ENCODE measurements at regions of chr7 and their contacts with region 1.

Region 1: GRCh38 chr7:50304911-50305582 is 531 bp downstream of the IKZF1 start:
- DNase-seq: no peak
- H3K4me3 Mint-ChIP-seq: peak overlapping the region; percentile 99
- H3K27ac Mint-ChIP-seq: peak overlapping the region; percentile 98
- H3K4me1 Mint-ChIP-seq: peaks cover 52% of the 10 kb centered on the region
- H3K27me3 Mint-ChIP-seq: no peaks in the 10 kb centered on the region

Region 2: DNA sequence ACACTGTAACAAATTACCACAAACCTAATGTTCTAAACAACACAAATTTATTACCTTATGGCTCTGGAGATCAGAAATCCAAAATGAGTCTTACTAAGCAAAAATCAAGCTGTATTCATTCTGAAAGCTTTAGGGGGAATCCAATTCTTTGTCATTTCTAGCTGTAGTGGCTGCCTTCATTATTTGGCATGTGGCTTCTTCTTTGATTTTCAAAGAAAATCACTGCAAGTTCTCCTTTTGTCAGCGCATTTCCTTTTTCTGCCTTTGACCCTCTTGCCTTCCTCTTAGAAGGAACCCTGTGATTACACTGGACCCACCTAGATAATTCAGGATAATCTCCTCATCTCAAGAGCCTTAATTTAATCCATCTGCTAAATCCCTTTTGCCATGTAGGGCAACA is 248.9 kb before region 1 on chr7:
- intact Hi-C with region 1: no loop called
- DNase-seq: no peak
- H3K4me3 Mint-ChIP-seq: no peak overlapping the region
- H3K27ac Mint-ChIP-seq: no peak overlapping the region
- H3K4me1 Mint-ChIP-seq: no peaks in the 10 kb centered on the region
- H3K27me3 Mint-ChIP-seq: peaks cover 14% of the 10 kb centered on the region

Region 3: DNA sequence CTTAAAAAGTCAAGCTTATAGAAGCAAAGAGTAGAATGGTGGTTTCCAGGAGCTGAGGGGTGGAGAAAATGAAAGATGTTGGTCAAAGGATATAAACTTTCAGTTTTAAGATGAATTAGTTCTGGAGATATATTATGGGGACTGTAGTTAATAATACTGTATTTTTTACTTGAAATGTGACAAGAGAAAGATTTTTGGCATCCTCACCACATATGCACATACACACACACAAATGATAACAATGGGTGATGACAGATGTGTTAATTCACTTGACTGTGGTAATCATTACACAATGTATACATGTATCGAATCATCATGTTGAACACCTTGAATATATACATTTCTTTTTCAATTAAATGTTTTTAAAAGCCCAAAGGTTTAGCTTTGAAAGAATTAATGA is 179.3 kb before region 1 on chr7:
- intact Hi-C with region 1: no loop called
- DNase-seq: no peak
- H3K4me3 Mint-ChIP-seq: no peak overlapping the region
- H3K27ac Mint-ChIP-seq: no peak overlapping the region
- H3K4me1 Mint-ChIP-seq: peaks cover 6% of the 10 kb centered on the region
- H3K27me3 Mint-ChIP-seq: peaks cover 21% of the 10 kb centered on the region

Region 4: GRCh38 chr7:50147951-50148808 is 156.9 kb before region 1 on chr7:
- intact Hi-C with region 1: loop called (anchors 5 kb)
- DNase-seq: peak; percentile 17
- H3K4me3 Mint-ChIP-seq: no peak overlapping the region
- H3K27ac Mint-ChIP-seq: peak overlapping the region; percentile 83
- H3K4me1 Mint-ChIP-seq: peaks cover 70% of the 10 kb centered on the region
- H3K27me3 Mint-ChIP-seq: no peaks in the 10 kb centered on the region

Region 5: DNA sequence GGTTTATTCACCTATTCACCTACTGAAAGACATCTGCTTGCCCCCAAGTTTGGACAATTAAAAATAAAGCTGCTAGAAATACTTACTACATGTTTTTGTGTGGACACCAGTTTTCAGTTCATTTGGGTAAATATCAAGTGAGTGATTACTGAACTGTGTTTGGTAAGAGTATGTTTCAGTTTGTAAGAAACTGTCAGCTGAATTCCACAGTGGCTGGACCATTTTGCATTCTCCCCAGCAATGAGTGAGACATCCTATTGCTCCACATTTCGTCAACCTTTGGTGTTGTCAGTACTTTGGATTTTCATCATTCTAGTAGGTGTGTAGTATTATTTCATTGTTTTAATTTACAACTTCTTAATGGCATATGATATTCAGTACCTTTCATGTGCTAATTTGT is 17.9 kb before region 1 on chr7:
- intact Hi-C with region 1: loop called (anchors 1 kb)
- DNase-seq: no peak
- H3K4me3 Mint-ChIP-seq: no peak overlapping the region
- H3K27ac Mint-ChIP-seq: no peak overlapping the region
- H3K4me1 Mint-ChIP-seq: peaks cover 42% of the 10 kb centered on the region
- H3K27me3 Mint-ChIP-seq: no peaks in the 10 kb centered on the region

Region 6: GRCh38 chr7:50317221-50317678 is 12.2 kb after region 1 on chr7:
- intact Hi-C with region 1: loop called (anchors 1 kb)
- DNase-seq: peak; percentile 53
- H3K4me3 Mint-ChIP-seq: peak overlapping the region; percentile 82
- H3K27ac Mint-ChIP-seq: peak overlapping the region; percentile 93
- H3K4me1 Mint-ChIP-seq: peaks cover 100% of the 10 kb centered on the region
- H3K27me3 Mint-ChIP-seq: no peaks in the 10 kb centered on the region

Region 7: GRCh38 chr7:50349963-50350944 is 45.2 kb after region 1 on chr7:
- intact Hi-C with region 1: loop called (anchors 1 kb)
- DNase-seq: peak; percentile 77
- H3K4me3 Mint-ChIP-seq: peak overlapping the region; percentile 53
- H3K27ac Mint-ChIP-seq: peak overlapping the region; percentile 93
- H3K4me1 Mint-ChIP-seq: peaks cover 97% of the 10 kb centered on the region
- H3K27me3 Mint-ChIP-seq: no peaks in the 10 kb centered on the region

Region 8: GRCh38 chr7:50418086-50418515 is 113.1 kb after region 1 on chr7:
- intact Hi-C with region 1: loop called (anchors 1 kb)
- DNase-seq: peak; percentile 64
- H3K4me3 Mint-ChIP-seq: no peak overlapping the region
- H3K27ac Mint-ChIP-seq: no peak overlapping the region
- H3K4me1 Mint-ChIP-seq: peaks cover 32% of the 10 kb centered on the region
- H3K27me3 Mint-ChIP-seq: no peaks in the 10 kb centered on the region

Region 9: DNA sequence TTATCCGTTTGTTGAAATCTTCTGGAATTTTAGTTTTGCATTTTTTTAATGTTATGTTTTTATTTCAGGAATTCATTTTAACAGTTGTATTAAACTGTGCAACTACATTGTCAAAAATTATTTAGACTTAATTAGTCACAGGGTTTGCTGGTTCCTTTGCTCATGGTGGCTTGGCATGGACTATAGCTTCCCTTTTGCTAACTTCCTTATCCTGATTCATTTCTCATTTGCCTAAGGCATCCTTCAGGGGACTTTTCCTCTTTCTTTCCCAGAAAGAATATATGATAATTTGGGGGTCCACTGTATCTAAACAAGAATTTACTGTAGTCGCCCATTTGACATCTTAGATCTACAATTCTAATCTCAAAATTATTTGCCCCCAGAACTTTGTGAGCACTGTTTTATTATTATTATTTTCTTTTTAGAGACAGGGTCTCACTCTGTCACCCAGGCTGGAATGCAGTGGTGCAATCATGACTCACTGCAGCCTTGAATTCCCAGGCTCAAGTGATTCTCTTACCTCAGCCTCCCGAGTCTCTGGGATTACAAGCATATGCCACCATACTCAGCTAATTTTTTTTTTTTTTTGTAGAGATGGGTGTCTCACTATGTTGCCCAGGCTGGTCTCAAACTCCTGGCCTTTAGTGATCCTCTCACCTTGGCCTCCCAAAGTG is 131.2 kb after region 1 on chr7:
- intact Hi-C with region 1: no loop called
- DNase-seq: no peak
- H3K4me3 Mint-ChIP-seq: no peak overlapping the region
- H3K27ac Mint-ChIP-seq: no peak overlapping the region
- H3K4me1 Mint-ChIP-seq: no peaks in the 10 kb centered on the region
- H3K27me3 Mint-ChIP-seq: no peaks in the 10 kb centered on the region